ENCODE measurements at regions of chr17 and their contacts with region 1.

Region 1: GRCh38 chr17:77054936-77055335 is 85.8 kb upstream of the SEC14L1 start:
- DNase-seq: peak; percentile 87
- H3K4me3 ChIP-seq: no peak overlapping the region
- H3K27ac ChIP-seq: no peak overlapping the region
- H3K4me1 ChIP-seq: peaks cover 0 to 18% of the 10 kb centered on the region in 2 experiments; a peak in 1 of 4 replicates
- H3K27me3 ChIP-seq: peaks cover 49% of the 10 kb centered on the region
- CTCF ChIP-seq: no peak
- EP300 ChIP-seq: 0 out of 4 replicates have a peak, but pooled peaks of 1 of the 2 experiments have one; percentile 45
- RAD21 ChIP-seq: 0 out of 2 replicates have a peak, but pooled peaks have one; percentile 8

Region 2: DNA sequence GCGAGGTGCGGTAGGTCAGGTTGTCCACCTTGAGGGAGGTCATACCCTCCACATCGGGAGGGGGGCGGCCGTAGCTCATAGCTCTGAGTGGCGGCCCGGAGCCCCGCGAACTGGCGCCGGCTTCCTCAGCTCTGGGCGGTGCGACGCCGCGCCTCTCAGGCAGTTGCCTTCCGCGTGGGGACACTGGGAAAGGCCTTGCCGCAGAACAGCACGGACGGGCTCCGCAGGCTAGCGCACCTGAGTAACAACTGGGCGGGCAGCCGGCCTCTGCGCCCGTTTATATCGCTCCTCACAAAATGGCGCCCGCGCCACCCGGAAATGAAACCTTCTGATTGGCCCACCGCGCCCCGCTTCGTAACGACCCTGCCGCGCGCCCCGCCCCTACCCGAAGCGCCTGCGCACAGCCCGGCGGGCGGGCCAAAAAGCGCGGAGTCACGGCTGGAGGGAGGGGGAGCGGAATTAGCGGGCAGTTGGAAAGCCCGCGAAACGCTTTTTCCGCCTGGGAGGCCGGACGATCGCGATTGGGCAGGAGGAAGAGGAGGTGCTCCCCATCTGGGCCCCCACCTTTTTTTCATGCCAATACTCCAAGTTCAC is 317.8 kb before region 1 on chr17 and contains the start of gene SRSF2:
- CTCF ChIA-PET with region 1: interaction called, 13 read pairs
- POLR2A ChIA-PET with region 1: no interaction called
- DNase-seq: peak; percentile 100
- H3K4me3 ChIP-seq: peak within 1 kb of the TSS; percentile 93 to 100
- H3K27ac ChIP-seq: peak within 1 kb of the TSS; percentile 98 to 100
- H3K4me1 ChIP-seq: peaks cover 34 to 44% of the 10 kb centered on the region in 2 experiments
- H3K27me3 ChIP-seq: no peaks in the 10 kb centered on the region
- CTCF ChIP-seq: no peak
- EP300 ChIP-seq: peak in 1 of 2 experiments; percentile 26; a peak in 1 of 4 replicates
- RAD21 ChIP-seq: no peak
- polyA plus RNA-seq, gene SRSF2: 211 and 271 TPM in 2 replicates

Region 3: GRCh38 chr17:76852843-76853242 is 202.1 kb before region 1 on chr17:
- CTCF ChIA-PET with region 1: interaction called, 13 read pairs
- POLR2A ChIA-PET with region 1: no interaction called
- DNase-seq: no peak
- H3K4me3 ChIP-seq: no peak overlapping the region
- H3K27ac ChIP-seq: no peak overlapping the region
- H3K4me1 ChIP-seq: peaks cover 0 to 5% of the 10 kb centered on the region in 2 experiments; a peak in 1 of 4 replicates
- H3K27me3 ChIP-seq: peaks cover 11% of the 10 kb centered on the region; the same call in 1 of the 2 replicates
- CTCF ChIP-seq: no peak
- EP300 ChIP-seq: no peak
- RAD21 ChIP-seq: no peak

Region 4: GRCh38 chr17:76905836-76906235 is 149.1 kb before region 1 on chr17:
- CTCF ChIA-PET with region 1: interaction called, 19 read pairs
- POLR2A ChIA-PET with region 1: no interaction called
- DNase-seq: no peak
- H3K4me3 ChIP-seq: no peak overlapping the region
- H3K27ac ChIP-seq: no peak overlapping the region
- H3K4me1 ChIP-seq: peaks cover 0 to 31% of the 10 kb centered on the region in 2 experiments; a peak in 1 of 4 replicates
- H3K27me3 ChIP-seq: no peaks in the 10 kb centered on the region
- CTCF ChIP-seq: no peak
- EP300 ChIP-seq: no peak
- RAD21 ChIP-seq: no peak

Region 5: GRCh38 chr17:76983075-76983775 is 71.7 kb before region 1 on chr17:
- CTCF ChIA-PET with region 1: interaction called, 19 read pairs
- POLR2A ChIA-PET with region 1: no interaction called
- DNase-seq: peak; percentile 41
- H3K4me3 ChIP-seq: no peak overlapping the region
- H3K27ac ChIP-seq: no peak overlapping the region
- H3K4me1 ChIP-seq: peaks cover 0 to 5% of the 10 kb centered on the region in 2 experiments; a peak in 1 of 4 replicates
- H3K27me3 ChIP-seq: peaks cover 23% of the 10 kb centered on the region
- CTCF ChIP-seq: no peak
- EP300 ChIP-seq: no peak
- RAD21 ChIP-seq: no peak

Region 6: GRCh38 chr17:77036807-77037381 is 18.0 kb before region 1 on chr17:
- CTCF ChIA-PET with region 1: interaction called, 252 read pairs
- POLR2A ChIA-PET with region 1: no interaction called
- DNase-seq: peak; percentile 84
- H3K4me3 ChIP-seq: peak overlapping the region in 1 of 2 experiments; percentile 4; a peak in 1 of 4 replicates
- H3K27ac ChIP-seq: peak overlapping the region in 1 of 2 experiments; percentile 17; a peak in 1 of 4 replicates
- H3K4me1 ChIP-seq: peaks cover 0 to 16% of the 10 kb centered on the region in 2 experiments; a peak in 2 of 4 replicates
- H3K27me3 ChIP-seq: peaks cover 42% of the 10 kb centered on the region
- CTCF ChIP-seq: no peak
- EP300 ChIP-seq: peak in 1 of 2 experiments; percentile 32; a peak in 1 of 4 replicates
- RAD21 ChIP-seq: peak; percentile 35

Measured in SK-N-SH (cell line).